ENCODE measurements at regions of chr14 and their contacts with region 1.

Region 1: DNA sequence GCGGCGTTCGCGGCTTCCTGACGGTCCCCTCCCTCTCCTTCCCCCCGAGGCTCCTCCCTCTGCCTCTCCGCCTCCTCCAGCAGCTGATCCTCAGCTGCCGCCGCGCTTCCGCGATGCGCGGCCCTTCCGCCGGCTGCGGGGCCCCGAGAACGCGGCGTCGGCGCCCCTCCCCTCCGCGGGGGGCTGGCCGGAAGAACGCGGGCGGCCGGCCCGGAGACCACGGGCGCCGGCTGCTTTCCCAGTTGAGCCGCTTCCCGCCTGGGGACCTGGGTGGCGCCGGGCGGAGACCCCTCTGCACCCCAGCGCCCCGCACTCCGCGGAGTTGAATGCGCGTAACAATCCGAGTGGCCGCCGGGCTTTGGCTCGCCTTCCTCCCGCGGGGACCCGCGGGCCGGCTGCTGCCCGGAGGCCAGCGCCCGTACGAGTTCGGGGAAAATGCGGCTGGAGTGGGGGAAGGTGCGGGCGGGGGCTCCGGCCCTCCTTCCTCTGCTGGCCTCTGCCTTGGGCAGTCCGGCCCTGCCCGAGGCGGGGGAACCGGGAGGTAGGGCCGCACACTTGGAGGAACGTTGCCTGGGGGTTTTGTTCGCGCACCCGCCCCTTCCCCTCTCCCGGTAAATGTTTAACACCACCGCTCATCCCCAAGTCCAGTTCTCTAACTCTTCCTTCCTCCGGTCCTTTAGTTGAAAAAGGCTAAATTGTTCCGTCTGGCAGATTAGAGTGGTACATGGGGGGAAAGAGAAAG is 383 bp upstream of the DCAF5 start:
- DNase-seq: peak; percentile 90
- ATAC-seq: peak; percentile 73
- H3K4me3 Mint-ChIP-seq: peak overlapping the region; percentile 92
- H3K27ac Mint-ChIP-seq: peak overlapping the region; percentile 48; the same call in 1 of the 2 replicates
- H3K4me1 Mint-ChIP-seq: peaks cover 28% of the 10 kb centered on the region
- H3K27me3 Mint-ChIP-seq: peaks cover 14% of the 10 kb centered on the region
- CTCF ChIP-seq: no peak

Region 2: GRCh38 chr14:69079183-69079742 is 74.0 kb before region 1 on chr14:
- CTCF ChIA-PET with region 1: no interaction called
- POLR2A ChIA-PET with region 1: no interaction called
- DNase-seq: no peak
- ATAC-seq: no peak
- H3K4me3 Mint-ChIP-seq: no peak overlapping the region
- H3K27ac Mint-ChIP-seq: 0 out of 2 replicates have a peak overlapping the region, but pooled peaks have one; percentile 1
- H3K4me1 Mint-ChIP-seq: peaks cover 12% of the 10 kb centered on the region; the same call in 1 of the 2 replicates
- H3K27me3 Mint-ChIP-seq: no peaks in the 10 kb centered on the region
- CTCF ChIP-seq: no peak

Region 3: DNA sequence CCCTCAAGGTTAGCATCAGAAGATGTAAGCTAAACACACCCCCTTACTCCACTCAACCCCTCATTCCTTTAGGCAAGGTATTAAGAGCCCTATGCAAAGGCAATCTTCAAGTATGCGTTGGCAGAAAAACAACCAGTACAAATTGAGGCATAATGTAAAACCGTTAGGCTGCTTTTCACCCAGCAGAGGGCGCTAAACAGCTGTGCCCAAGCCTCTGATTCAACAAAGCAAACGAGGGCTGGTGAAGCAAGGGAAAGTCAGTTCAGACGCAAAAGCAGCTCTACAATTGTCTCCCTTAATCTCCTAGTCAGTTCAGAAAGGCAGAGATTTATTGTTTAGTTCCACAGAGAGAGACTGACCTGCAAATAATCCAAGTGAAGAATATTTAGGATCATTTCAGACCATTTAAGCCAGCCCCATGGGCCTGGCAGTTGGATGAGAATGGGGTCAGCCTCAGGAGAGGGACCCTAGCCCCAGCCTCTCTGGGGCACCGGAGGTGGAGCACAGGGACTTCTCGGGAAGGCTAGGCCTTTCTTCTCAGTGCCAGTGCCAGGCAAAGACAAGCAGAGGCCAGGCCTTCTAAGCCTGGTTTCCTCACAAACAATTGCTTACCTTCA is 23.9 kb before region 1 on chr14:
- CTCF ChIA-PET with region 1: interaction called, 71 read pairs
- POLR2A ChIA-PET with region 1: no interaction called
- DNase-seq: peak; percentile 64
- ATAC-seq: peak; percentile 90
- H3K4me3 Mint-ChIP-seq: no peak overlapping the region; the same call in 1 of the 2 replicates
- H3K27ac Mint-ChIP-seq: peak overlapping the region; percentile 46
- H3K4me1 Mint-ChIP-seq: peaks cover 10% of the 10 kb centered on the region
- H3K27me3 Mint-ChIP-seq: no peaks in the 10 kb centered on the region
- CTCF ChIP-seq: peak; percentile 85

Region 4: DNA sequence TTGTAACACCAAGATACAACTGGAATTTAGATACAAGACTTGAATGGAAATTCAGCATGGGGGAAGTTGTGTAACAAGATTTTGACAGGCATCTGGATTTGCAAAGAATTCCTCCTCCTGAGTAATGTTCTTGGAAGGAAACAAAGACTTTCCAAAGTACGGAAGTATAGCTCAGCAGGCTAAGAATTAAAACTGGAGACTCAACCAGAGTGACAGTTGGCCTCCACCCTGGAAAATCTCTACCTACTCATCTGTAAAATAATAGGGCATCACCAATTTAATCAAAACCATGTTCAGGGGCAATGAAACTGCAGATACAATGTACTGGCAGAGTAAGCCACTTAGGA is 15.1 kb before region 1 on chr14:
- CTCF ChIA-PET with region 1: interaction called, 11 read pairs
- POLR2A ChIA-PET with region 1: interaction called, 3 read pairs
- DNase-seq: no peak
- ATAC-seq: no peak
- H3K4me3 Mint-ChIP-seq: no peak overlapping the region
- H3K27ac Mint-ChIP-seq: peak overlapping the region; percentile 32; the same call in 1 of the 2 replicates
- H3K4me1 Mint-ChIP-seq: peaks cover 23% of the 10 kb centered on the region
- H3K27me3 Mint-ChIP-seq: no peaks in the 10 kb centered on the region
- CTCF ChIP-seq: no peak

Region 5: GRCh38 chr14:69191340-69192111 is 38.2 kb after region 1 on chr14 and contains the start of gene EXD2:
- CTCF ChIA-PET with region 1: interaction called, 20 read pairs
- POLR2A ChIA-PET with region 1: interaction called, 3 read pairs
- DNase-seq: peak; percentile 91
- ATAC-seq: peak; percentile 95
- H3K4me3 Mint-ChIP-seq: peak within 1 kb of the TSS; percentile 92
- H3K27ac Mint-ChIP-seq: peak within 1 kb of the TSS; percentile 96
- H3K4me1 Mint-ChIP-seq: peaks cover 18% of the 10 kb centered on the region
- H3K27me3 Mint-ChIP-seq: peaks cover 4% of the 10 kb centered on the region
- CTCF ChIP-seq: no peak
- total RNA-seq, gene EXD2: 24.1 to 28.2 TPM (median 26.2 TPM) in 3 replicates

Region 6: DNA sequence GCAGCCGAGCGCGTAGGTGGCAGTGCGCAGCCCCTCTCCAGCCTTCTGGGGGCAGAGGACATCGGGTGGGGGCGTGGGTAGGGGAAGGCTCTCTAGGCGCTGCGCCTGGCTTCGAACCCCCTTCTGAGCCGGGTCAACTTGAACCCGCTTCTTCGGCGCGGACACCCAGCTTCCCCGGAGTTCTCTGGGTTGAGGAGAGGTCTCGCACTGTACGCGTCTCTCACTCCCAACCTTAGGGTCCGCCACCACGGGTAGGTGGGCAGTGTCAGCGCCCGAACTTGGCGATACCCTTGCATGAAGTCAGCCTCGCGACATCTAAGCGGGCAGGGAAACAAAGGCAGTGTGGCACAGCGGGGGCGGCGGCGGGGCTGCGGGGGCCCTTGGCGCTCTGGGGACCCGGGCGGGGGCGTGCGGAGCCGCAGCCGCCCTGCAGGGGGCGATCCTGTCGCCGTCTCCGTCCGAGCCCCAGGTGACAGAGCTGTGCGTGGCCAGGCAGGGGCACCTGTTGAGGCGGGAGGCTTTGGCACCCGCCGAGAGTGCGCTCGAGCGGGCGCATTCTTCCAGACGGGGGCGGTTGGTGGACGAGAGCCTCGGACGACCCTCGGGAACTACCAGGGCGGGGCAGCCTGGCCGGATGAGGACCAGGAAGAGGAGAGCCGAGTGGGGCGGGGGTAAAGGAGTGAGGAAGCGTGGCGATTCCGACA is 107.7 kb after region 1 on chr14:
- CTCF ChIA-PET with region 1: interaction called, 10 read pairs
- POLR2A ChIA-PET with region 1: no interaction called
- DNase-seq: peak; percentile 73
- ATAC-seq: peak; percentile 43
- H3K4me3 Mint-ChIP-seq: peak overlapping the region; percentile 79
- H3K27ac Mint-ChIP-seq: no peak overlapping the region
- H3K4me1 Mint-ChIP-seq: peaks cover 21% of the 10 kb centered on the region
- H3K27me3 Mint-ChIP-seq: peaks cover 57% of the 10 kb centered on the region
- CTCF ChIP-seq: peak; percentile 82

Measured in WTC11 (cell line).